ENCODE measurements at regions of chr1 and their contacts with region 1.

Region 1: GRCh38 chr1:151165738-151166505 is at the starts of genes LYSMD1 and SCNM1:
- DNase-seq: peak; percentile 87
- ATAC-seq: peak; percentile 96
- H3K4me3 Mint-ChIP-seq: peak within 1 kb of the TSS; percentile 92
- H3K27ac Mint-ChIP-seq: peak within 1 kb of the TSS; percentile 89
- H3K4me1 Mint-ChIP-seq: peaks cover 37% of the 10 kb centered on the region
- H3K27me3 Mint-ChIP-seq: no peaks in the 10 kb centered on the region
- CTCF ChIP-seq: no peak
- total RNA-seq, gene LYSMD1: 4.9 and 5.4 TPM in 2 replicates
- total RNA-seq, gene SCNM1: 52.8 and 58.2 TPM in 2 replicates

Region 2: GRCh38 chr1:151098126-151098525 is 67.8 kb before region 1 on chr1:
- CTCF ChIA-PET with region 1: interaction called, 8 read pairs
- POLR2A ChIA-PET with region 1: interaction called, 12 read pairs
- intact Hi-C with region 1: no loop called
- DNase-seq: no peak
- ATAC-seq: no peak
- H3K4me3 Mint-ChIP-seq: no peak overlapping the region
- H3K27ac Mint-ChIP-seq: no peak overlapping the region
- H3K4me1 Mint-ChIP-seq: no peaks in the 10 kb centered on the region
- H3K27me3 Mint-ChIP-seq: no peaks in the 10 kb centered on the region
- CTCF ChIP-seq: no peak

Region 3: GRCh38 chr1:151130987-151131586 is 34.8 kb before region 1 on chr1:
- CTCF ChIA-PET with region 1: interaction called, 3 read pairs
- POLR2A ChIA-PET with region 1: interaction called, 5 read pairs
- intact Hi-C with region 1: loop called (anchors 1 kb)
- DNase-seq: peak; percentile 73
- ATAC-seq: peak; percentile 100
- H3K4me3 Mint-ChIP-seq: peak overlapping the region; percentile 84
- H3K27ac Mint-ChIP-seq: peak overlapping the region; percentile 89
- H3K4me1 Mint-ChIP-seq: peaks cover 12% of the 10 kb centered on the region
- H3K27me3 Mint-ChIP-seq: no peaks in the 10 kb centered on the region
- CTCF ChIP-seq: no peak

Region 4: GRCh38 chr1:151146412-151147140 is 19.3 kb before region 1 on chr1 and contains the start of gene SEMA6C:
- CTCF ChIA-PET with region 1: no interaction called
- POLR2A ChIA-PET with region 1: no interaction called
- intact Hi-C with region 1: loop called (anchors 1 kb)
- DNase-seq: peak; percentile 80
- ATAC-seq: peak; percentile 100
- H3K4me3 Mint-ChIP-seq: peak within 1 kb of the TSS; percentile 90
- H3K27ac Mint-ChIP-seq: no peak within 1 kb of the TSS
- H3K4me1 Mint-ChIP-seq: peaks cover 18% of the 10 kb centered on the region
- H3K27me3 Mint-ChIP-seq: peaks cover 7% of the 10 kb centered on the region
- CTCF ChIP-seq: no peak
- total RNA-seq, gene SEMA6C: 0.59 and 0.67 TPM in 2 replicates

Measured in activated B cell treated with CpG ODN at 0.5 μM for 24 hours (primary cell).